GM12878 (cell line): ENCODE measurements at regions of chr1 and their contacts with region 1.

Region 1: DNA sequence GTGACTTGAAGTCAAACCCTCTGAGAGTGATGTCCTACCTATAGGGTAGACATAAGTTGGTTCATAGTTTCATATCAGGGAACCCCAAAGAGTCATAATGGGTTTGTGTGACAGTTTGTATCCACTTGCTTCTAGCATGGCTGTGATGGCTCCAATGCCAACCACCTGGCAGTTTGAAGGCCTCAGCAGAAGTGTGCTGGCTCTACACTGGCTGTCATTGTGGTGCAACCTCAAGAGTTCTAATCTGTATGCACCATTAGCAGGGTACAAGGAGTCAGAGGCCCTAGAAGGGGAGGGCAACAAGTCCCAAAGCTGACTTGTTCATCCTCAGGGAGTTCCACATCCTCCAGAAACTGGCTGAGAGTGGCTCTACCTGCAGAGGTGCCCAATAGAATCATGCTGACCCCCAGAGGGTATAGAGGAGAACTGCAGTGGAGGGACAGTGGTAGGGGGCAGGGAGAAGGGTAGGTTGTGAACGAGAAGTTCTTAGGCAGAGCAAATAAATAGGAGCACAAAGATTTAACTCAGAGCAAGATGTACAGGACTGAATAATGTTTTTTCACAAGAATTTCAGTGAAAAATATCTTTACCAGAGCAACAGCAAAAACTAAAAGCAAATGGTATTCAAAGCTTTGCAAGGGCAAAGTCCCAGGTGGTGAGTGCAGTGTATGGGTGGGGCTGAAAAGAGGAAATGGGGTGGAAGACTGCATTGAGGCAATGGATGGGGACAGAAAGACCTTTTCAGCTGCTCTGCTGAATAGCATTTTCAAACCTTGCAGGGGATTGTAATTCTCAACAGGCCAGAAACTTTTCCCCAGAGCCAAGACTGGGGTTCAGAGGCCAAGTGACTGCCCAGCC is 3.2 kb downstream of the FCRL2 start:
- DNase-seq: no peak
- ATAC-seq: peak; percentile 89
- H3K4me3 ChIP-seq: no peak overlapping the region
- H3K27ac ChIP-seq: no peak overlapping the region
- H3K4me1 ChIP-seq: peaks cover 15% of the 10 kb centered on the region
- H3K27me3 ChIP-seq: peaks cover 3 to 7% of the 10 kb centered on the region in 2 experiments; a peak in 1 of 4 replicates
- CTCF ChIP-seq: peak; percentile 56 to 67 (median 63)
- EP300 ChIP-seq: no peak
- POLR2A ChIP-seq: no peak
- RAD21 ChIP-seq: peak; percentile 89

Region 2: GRCh38 chr1:157785248-157785647 is 11.5 kb after region 1 on chr1:
- CTCF ChIA-PET with region 1: interaction called, 5 read pairs
- POLR2A ChIA-PET with region 1: no interaction called
- RAD21 ChIA-PET with region 1: interaction called, 3 read pairs
- SMC1A ChIA-PET with region 1: interaction called, 12 read pairs
- in situ Hi-C with region 1: no loop called
- intact Hi-C with region 1: no loop called
- DNase-seq: no peak
- ATAC-seq: no peak
- H3K4me3 ChIP-seq: no peak overlapping the region
- H3K27ac ChIP-seq: no peak overlapping the region
- H3K4me1 ChIP-seq: peaks cover 27% of the 10 kb centered on the region
- H3K27me3 ChIP-seq: no peaks in the 10 kb centered on the region
- CTCF ChIP-seq: no peak
- EP300 ChIP-seq: no peak
- POLR2A ChIP-seq: no peak
- RAD21 ChIP-seq: no peak

Region 3: DNA sequence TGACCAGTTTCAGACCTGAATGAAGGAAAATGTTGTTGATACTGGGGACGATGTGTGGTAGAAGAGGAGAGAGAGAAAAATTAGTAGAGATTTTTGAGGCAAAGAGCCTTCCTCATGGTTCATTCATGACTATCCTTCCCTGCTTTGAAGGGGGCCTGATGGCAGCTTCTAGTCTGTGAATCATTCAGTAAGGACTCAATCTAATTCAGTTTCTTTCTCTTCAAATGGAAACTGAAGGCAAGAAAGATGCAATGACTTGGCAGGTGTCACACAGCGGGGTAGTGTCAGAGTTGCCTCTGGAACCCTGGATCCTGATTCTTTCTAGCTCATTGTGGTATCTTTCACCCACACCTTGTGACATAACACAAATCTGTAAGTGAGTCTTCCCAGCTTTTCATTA is 82.8 kb after region 1 on chr1:
- CTCF ChIA-PET with region 1: no interaction called
- POLR2A ChIA-PET with region 1: no interaction called
- RAD21 ChIA-PET with region 1: no interaction called
- SMC1A ChIA-PET with region 1: no interaction called
- in situ Hi-C with region 1: no loop called
- intact Hi-C with region 1: loop called (anchors 5 kb)
- DNase-seq: no peak
- ATAC-seq: peak; percentile 30; the same call in 1 of the 3 replicates
- H3K4me3 ChIP-seq: no peak overlapping the region; the same call in 1 of the 2 replicates
- H3K27ac ChIP-seq: no peak overlapping the region
- H3K4me1 ChIP-seq: peaks cover 7% of the 10 kb centered on the region
- H3K27me3 ChIP-seq: no peaks in the 10 kb centered on the region; a peak in 1 of 4 replicates
- CTCF ChIP-seq: no peak
- EP300 ChIP-seq: no peak
- POLR2A ChIP-seq: no peak
- RAD21 ChIP-seq: no peak

Region 4: DNA sequence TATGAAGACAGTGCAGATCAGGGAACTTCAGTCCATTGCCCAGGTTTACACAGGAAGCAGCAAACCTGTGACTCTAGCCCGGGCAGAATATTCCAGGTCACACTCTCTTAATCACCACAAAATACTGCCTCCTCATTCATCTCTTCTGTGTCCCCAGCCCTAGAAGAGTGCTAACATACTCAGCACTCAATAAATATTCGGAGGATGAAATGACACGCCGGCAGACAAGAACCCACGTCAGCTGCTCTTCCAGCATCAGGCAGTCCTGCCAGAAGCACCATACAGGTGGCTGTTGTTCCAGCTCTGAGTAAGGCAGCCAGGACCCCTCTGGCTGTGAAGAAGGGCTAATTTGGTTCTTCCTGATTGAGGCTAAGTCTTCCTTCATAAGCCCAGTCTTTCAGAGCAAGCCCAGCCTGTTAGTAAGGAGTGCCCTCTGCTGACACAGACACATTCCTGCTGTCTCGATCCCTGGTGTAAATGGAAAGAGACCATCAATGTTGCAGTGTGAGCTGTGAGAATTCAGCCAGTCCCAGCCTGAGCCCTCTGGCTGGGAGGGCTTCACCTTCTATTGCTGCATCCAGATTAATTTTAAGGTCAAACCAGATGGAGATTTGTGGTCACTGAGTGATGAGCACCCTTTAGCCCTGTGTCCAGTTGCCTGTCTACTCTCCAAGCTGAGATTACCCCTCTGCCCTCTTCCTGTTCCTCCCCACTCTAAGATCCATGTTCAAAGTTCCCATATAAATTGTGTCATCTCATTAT is 174.8 kb after region 1 on chr1:
- CTCF ChIA-PET with region 1: no interaction called
- POLR2A ChIA-PET with region 1: no interaction called
- RAD21 ChIA-PET with region 1: interaction called, 4 read pairs
- SMC1A ChIA-PET with region 1: no interaction called
- in situ Hi-C with region 1: no loop called
- intact Hi-C with region 1: loop called (anchors 5 kb)
- DNase-seq: no peak
- ATAC-seq: peak; percentile 59
- H3K4me3 ChIP-seq: no peak overlapping the region
- H3K27ac ChIP-seq: no peak overlapping the region
- H3K4me1 ChIP-seq: peaks cover 3% of the 10 kb centered on the region; the same call in 1 of the 2 replicates
- H3K27me3 ChIP-seq: peaks cover 0 to 7% of the 10 kb centered on the region in 2 experiments; a peak in 2 of 4 replicates
- CTCF ChIP-seq: peak; percentile 53 to 64 (median 56); a peak in 5 of 6 replicates
- EP300 ChIP-seq: no peak
- POLR2A ChIP-seq: no peak
- RAD21 ChIP-seq: peak; percentile 86

Region 5: GRCh38 chr1:158019171-158019868 is 245.6 kb after region 1 on chr1:
- CTCF ChIA-PET with region 1: no interaction called
- POLR2A ChIA-PET with region 1: no interaction called
- RAD21 ChIA-PET with region 1: no interaction called
- SMC1A ChIA-PET with region 1: no interaction called
- in situ Hi-C with region 1: no loop called
- intact Hi-C with region 1: no loop called
- DNase-seq: no peak
- ATAC-seq: no peak
- H3K4me3 ChIP-seq: no peak overlapping the region
- H3K27ac ChIP-seq: no peak overlapping the region
- H3K4me1 ChIP-seq: no peaks in the 10 kb centered on the region
- H3K27me3 ChIP-seq: no peaks in the 10 kb centered on the region; a peak in 1 of 4 replicates
- CTCF ChIP-seq: no peak
- EP300 ChIP-seq: no peak
- POLR2A ChIP-seq: no peak
- RAD21 ChIP-seq: no peak